Activated naive CD8-positive, alpha-beta T cell treated with anti-CD3 and anti-CD28 coated beads, Interleukin-2, amount 10 ng/mL, durations not matched to agents 7 days and 5 days (primary cell): ENCODE measurements at regions of chr12 and their contacts with region 1.

Region 1: DNA sequence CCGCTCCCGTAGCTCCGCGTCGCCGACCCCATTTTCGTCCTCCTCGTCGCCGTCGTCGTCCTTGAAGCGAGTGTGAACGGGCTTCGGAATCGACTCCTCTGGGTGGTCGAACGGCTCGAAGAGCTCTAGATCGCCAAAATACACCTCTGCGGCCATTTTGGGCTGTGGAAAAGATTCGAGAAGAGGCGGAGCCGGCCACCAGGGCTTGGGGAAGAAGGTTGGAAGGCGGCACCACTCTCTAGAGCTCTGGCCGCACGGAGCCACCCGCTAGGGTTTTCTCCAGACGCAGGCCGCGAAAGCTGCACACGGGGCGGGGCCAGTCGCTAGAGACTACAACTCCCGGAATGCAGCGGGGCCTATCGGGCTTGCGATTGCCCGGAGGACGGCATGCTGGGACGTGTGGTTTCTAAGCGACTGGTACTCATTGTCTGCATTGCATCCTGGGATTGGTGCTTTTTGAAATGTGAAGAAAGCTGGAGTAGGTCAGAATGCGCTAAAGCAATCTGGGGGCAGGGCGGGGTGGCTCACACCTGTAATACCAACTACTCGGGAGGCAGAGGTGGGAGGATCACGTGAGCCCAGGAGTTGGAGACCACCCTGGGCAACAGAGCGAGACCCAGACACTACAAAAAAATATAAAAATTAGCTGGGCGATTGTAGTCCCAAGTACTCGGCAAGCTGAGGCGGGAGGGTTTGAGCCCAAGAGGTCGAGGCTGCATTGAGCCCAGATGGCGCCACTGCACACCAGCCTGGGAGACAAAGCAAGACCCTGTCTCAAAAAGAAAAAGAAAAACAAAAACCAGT is at the start of gene ZCCHC8:
- DNase-seq: peak; percentile 94
- ATAC-seq: peak; percentile 93
- H3K4me3 Mint-ChIP-seq: peak within 1 kb of the TSS; percentile 98
- H3K27ac Mint-ChIP-seq: peak within 1 kb of the TSS; percentile 99
- H3K4me1 Mint-ChIP-seq: peaks cover 27% of the 10 kb centered on the region
- H3K27me3 Mint-ChIP-seq: no peaks in the 10 kb centered on the region
- total RNA-seq, gene ZCCHC8: 44.8 to 45.3 TPM

Region 2: GRCh38 chr12:122225683-122226407 is 275.0 kb before region 1 on chr12 and contains the start of gene DIABLO:
- POLR2A ChIA-PET with region 1: interaction called, 11 read pairs
- DNase-seq: peak; percentile 100
- ATAC-seq: peak; percentile 94
- H3K4me3 Mint-ChIP-seq: peak within 1 kb of the TSS; percentile 89
- H3K27ac Mint-ChIP-seq: peak within 1 kb of the TSS; percentile 93
- H3K4me1 Mint-ChIP-seq: peaks cover 35% of the 10 kb centered on the region
- H3K27me3 Mint-ChIP-seq: no peaks in the 10 kb centered on the region
- total RNA-seq, gene DIABLO: 44.4 to 45.5 TPM

Region 3: GRCh38 chr12:122399592-122400373 is 101.1 kb before region 1 on chr12:
- POLR2A ChIA-PET with region 1: interaction called, 15 read pairs
- DNase-seq: peak; percentile 48
- ATAC-seq: peak; percentile 75
- H3K4me3 Mint-ChIP-seq: no peak overlapping the region
- H3K27ac Mint-ChIP-seq: peak overlapping the region; percentile 72
- H3K4me1 Mint-ChIP-seq: peaks cover 27% of the 10 kb centered on the region
- H3K27me3 Mint-ChIP-seq: no peaks in the 10 kb centered on the region

Region 4: GRCh38 chr12:122452701-122453285 is 48.1 kb before region 1 on chr12:
- POLR2A ChIA-PET with region 1: interaction called, 12 read pairs
- DNase-seq: peak; percentile 52
- ATAC-seq: no peak
- H3K4me3 Mint-ChIP-seq: peak overlapping the region; percentile 83
- H3K27ac Mint-ChIP-seq: peak overlapping the region; percentile 99
- H3K4me1 Mint-ChIP-seq: peaks cover 23% of the 10 kb centered on the region
- H3K27me3 Mint-ChIP-seq: no peaks in the 10 kb centered on the region

Region 5: DNA sequence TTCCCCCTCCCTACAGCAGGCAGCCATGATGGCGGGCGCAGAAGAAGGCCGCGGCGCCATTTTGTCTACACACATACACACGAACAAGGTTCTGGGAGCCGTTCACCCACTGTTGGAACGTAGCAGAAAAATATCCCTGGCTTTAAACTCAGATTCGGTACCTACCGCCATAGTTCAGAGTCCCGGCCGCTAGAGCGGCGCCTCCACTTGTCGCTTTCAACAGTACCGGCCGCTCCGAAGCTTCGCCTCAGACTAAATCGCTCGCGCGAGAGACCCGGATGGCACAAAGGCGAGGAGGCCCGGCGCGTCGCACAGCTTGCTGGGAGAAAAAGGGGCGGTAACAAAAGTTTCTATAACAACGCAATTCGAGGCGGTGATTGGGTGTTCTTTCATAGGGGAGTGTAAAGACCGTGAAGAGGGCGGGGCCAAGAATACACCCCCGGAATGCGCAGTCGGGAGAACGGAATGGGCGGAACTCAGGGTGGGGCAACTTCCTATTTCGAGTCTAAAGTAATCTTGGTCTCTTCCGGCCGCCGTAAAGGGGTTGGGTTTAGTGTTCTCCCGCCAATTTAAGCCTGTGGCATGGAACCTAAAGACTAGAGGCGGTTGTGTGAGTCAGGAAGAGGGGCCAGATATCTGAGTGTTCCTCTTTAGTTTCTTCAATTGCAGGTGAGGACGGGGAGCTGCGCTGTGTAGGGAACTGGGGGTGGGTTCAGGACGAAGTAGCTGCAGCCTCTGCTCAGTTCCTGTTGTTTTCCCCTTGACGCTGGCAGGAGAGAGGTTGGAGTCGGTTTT is 26.0 kb after region 1 on chr12 and contains the starts of genes KNTC1 and RSRC2:
- POLR2A ChIA-PET with region 1: interaction called, 145 read pairs
- DNase-seq: peak; percentile 91
- ATAC-seq: peak; percentile 91
- H3K4me3 Mint-ChIP-seq: no peak within 1 kb of the TSS
- H3K27ac Mint-ChIP-seq: no peak within 1 kb of the TSS
- H3K4me1 Mint-ChIP-seq: peaks cover 34% of the 10 kb centered on the region
- H3K27me3 Mint-ChIP-seq: no peaks in the 10 kb centered on the region
- total RNA-seq, gene KNTC1: 125 to 130 TPM
- total RNA-seq, gene RSRC2: 108 to 115 TPM

Region 6: GRCh38 chr12:122721057-122721545 is 220.2 kb after region 1 on chr12:
- POLR2A ChIA-PET with region 1: no interaction called
- DNase-seq: no peak
- ATAC-seq: no peak
- H3K4me3 Mint-ChIP-seq: no peak overlapping the region
- H3K27ac Mint-ChIP-seq: no peak overlapping the region
- H3K4me1 Mint-ChIP-seq: peaks cover 17% of the 10 kb centered on the region
- H3K27me3 Mint-ChIP-seq: peaks cover 8% of the 10 kb centered on the region